CD4-positive, alpha-beta T cell (primary cell): ENCODE measurements at regions of chr17 and their contacts with region 1.

Region 1: DNA sequence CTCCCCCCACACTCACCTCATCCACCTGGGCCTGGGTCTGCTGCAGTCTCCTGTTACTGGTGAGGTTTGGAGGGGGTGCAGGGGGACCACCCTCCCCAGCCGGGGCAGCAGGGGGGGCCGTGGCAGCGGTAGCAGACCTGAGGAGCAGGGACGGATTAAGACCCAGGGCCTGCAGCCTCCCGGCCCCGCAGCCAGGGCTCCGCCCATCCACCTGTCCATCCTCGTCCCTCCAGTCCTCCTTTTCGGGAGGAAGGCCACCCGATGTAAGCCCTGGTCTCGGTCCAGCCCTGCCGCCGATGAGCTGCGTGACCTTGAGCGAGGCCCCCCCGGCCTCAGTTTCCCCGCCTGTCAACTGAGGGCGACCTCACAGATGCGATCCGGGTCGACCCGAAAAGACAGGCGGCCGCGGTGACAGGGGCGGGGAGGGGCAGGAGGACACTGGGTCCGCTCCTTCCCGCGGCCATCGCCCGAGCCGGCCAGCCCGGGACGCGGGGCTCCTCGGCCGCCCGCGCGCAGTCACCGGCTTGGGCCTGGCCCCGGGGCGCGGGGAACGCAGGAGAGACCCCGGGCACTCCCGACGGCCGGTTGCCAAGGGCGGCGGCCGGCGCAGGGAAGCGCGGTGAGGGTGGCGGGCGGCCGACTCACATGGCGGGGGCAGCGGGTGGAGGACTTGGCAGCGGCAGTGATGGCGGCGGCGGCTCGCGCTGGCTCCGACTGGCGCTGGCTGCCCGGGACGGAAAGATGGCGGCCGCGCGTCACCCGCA is at the start of gene VAMP2:
- DNase-seq: peak; percentile 71 to 95 (median 83)
- ATAC-seq: peak; percentile 47
- H3K4me3 ChIP-seq: peak within 1 kb of the TSS; percentile 86
- H3K4me3 Mint-ChIP-seq: peak within 1 kb of the TSS; percentile 95
- H3K27ac ChIP-seq: peak within 1 kb of the TSS; percentile 94 to 96
- H3K27ac Mint-ChIP-seq: no peak within 1 kb of the TSS
- H3K4me1 ChIP-seq: peaks cover 72% of the 10 kb centered on the region
- H3K4me1 Mint-ChIP-seq: peaks cover 67% of the 10 kb centered on the region
- H3K27me3 ChIP-seq: no peaks in the 10 kb centered on the region
- H3K27me3 Mint-ChIP-seq: no peaks in the 10 kb centered on the region
- CTCF ChIP-seq: no peak
- total RNA-seq, gene VAMP2: 351 to 366 TPM

Region 2: DNA sequence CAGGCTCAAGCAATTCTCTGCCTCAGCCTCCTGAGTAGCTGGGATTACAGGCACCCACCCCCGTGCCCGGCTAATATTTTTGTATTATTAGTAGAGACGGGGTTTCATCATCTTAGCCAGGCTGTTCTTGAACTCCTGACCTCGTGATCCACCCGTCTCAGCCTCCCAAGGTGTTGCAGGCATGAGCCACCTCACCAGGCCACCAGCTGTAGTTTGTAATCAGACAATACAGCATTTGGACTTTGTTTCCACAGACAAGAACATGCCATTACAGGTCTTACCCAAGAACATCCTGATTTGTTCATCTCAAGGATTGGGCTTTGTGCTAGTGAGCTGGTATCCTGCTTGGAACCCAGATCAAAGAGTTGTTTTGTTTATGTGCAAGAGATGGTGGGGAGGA is 1480.7 kb before region 1 on chr17:
- CTCF ChIA-PET with region 1: no interaction called
- POLR2A ChIA-PET with region 1: no interaction called
- intact Hi-C with region 1: no loop called
- DNase-seq: no peak
- ATAC-seq: no peak
- H3K4me3 ChIP-seq: no peak overlapping the region
- H3K4me3 Mint-ChIP-seq: no peak overlapping the region
- H3K27ac ChIP-seq: no peak overlapping the region
- H3K27ac Mint-ChIP-seq: no peak overlapping the region
- H3K4me1 ChIP-seq: peaks cover 9% of the 10 kb centered on the region
- H3K4me1 Mint-ChIP-seq: peaks cover 10% of the 10 kb centered on the region
- H3K27me3 ChIP-seq: peaks cover 10 to 36% of the 10 kb centered on the region in 2 experiments
- H3K27me3 Mint-ChIP-seq: peaks cover 52% of the 10 kb centered on the region
- CTCF ChIP-seq: no peak

Region 3: DNA sequence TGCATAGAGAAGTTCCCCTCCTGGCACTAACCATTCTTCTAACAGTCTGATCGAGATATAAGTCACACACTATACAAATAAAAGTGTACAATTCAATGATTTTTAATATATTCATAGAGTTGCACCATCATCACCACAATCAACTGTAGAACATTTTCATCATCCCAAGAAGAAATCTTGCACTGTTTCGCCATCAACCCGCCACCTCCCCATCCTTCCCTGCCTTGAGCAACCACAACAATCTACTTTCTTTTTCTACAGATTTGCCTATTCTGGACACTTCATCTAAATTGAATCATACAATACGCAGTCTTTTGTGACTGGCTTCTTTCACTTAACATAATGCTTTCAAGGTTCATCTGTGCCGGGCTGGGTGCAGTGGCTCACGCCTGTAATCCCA is 193.0 kb before region 1 on chr17:
- CTCF ChIA-PET with region 1: no interaction called
- POLR2A ChIA-PET with region 1: no interaction called
- intact Hi-C with region 1: no loop called
- DNase-seq: no peak
- ATAC-seq: no peak
- H3K4me3 ChIP-seq: no peak overlapping the region
- H3K4me3 Mint-ChIP-seq: no peak overlapping the region
- H3K27ac ChIP-seq: no peak overlapping the region
- H3K27ac Mint-ChIP-seq: no peak overlapping the region
- H3K4me1 ChIP-seq: no peaks in the 10 kb centered on the region
- H3K4me1 Mint-ChIP-seq: no peaks in the 10 kb centered on the region
- H3K27me3 ChIP-seq: peaks cover 2 to 10% of the 10 kb centered on the region in 2 experiments
- H3K27me3 Mint-ChIP-seq: peaks cover 6% of the 10 kb centered on the region
- CTCF ChIP-seq: no peak

Region 4: DNA sequence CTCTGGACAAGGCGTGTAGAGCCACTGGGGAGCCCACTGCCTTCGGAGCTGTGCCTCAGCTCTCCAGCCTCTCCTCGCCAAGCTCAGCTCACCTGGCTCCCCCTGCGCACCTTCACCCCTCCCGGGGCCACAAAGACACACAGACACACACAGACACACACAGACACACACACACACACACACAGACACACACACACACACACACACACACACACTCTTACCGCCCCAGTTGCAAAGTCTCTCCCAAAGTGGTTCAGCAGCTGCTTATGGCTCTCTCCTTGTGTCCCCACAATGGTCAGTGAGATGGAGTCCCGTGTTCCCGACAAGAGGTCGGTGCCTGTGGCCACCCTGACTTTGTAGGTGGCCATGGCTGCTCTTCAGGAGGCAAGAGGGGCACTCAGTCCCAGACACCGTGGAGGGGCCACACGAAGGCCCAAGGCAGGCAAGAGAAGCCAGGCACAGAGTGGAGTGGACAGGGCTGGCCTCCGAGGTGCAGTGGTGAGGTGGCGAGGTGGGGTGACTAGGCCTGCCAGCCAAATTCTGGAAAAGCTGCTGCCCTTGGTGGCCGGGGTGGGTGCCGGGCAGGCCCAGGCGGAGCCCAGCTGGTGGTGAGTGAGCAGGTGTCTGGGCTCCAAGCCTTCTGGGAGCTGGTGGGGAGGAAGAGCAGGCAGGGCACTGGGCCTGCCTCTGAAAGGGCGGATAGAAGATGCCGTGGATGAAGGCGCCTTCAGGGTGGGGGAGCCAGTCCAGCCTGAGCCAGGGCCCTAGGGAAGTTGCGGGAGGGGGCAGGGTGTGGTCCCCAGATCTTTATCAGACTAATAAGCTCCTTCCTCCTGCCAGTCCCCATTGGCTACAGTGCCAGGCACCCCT is 75.1 kb before region 1 on chr17 and contains the start of gene ALOX12B:
- CTCF ChIA-PET with region 1: no interaction called
- POLR2A ChIA-PET with region 1: no interaction called
- intact Hi-C with region 1: no loop called
- DNase-seq: no peak
- ATAC-seq: no peak
- H3K4me3 ChIP-seq: no peak within 1 kb of the TSS
- H3K4me3 Mint-ChIP-seq: no peak within 1 kb of the TSS
- H3K27ac ChIP-seq: no peak within 1 kb of the TSS
- H3K27ac Mint-ChIP-seq: no peak within 1 kb of the TSS
- H3K4me1 ChIP-seq: no peaks in the 10 kb centered on the region
- H3K4me1 Mint-ChIP-seq: no peaks in the 10 kb centered on the region
- H3K27me3 ChIP-seq: peaks cover 4 to 6% of the 10 kb centered on the region in 2 experiments
- H3K27me3 Mint-ChIP-seq: peaks cover 26% of the 10 kb centered on the region
- CTCF ChIP-seq: no peak
- total RNA-seq, gene ALOX12B: 0.41 TPM in 1 of 2 experiments, not detected in the other

Region 5: GRCh38 chr17:8151123-8151640 is 11.2 kb before region 1 on chr17:
- CTCF ChIA-PET with region 1: interaction called, 5 read pairs
- POLR2A ChIA-PET with region 1: interaction called, 34 read pairs
- intact Hi-C with region 1: no loop called
- DNase-seq: peak; percentile 82 to 96 (median 90)
- ATAC-seq: peak; percentile 43
- H3K4me3 ChIP-seq: peak overlapping the region; percentile 75
- H3K4me3 Mint-ChIP-seq: peak overlapping the region; percentile 95
- H3K27ac ChIP-seq: peak overlapping the region; percentile 99 to 100
- H3K27ac Mint-ChIP-seq: no peak overlapping the region
- H3K4me1 ChIP-seq: peaks cover 85% of the 10 kb centered on the region
- H3K4me1 Mint-ChIP-seq: peaks cover 51% of the 10 kb centered on the region
- H3K27me3 ChIP-seq: no peaks in the 10 kb centered on the region
- H3K27me3 Mint-ChIP-seq: peaks cover 4% of the 10 kb centered on the region
- CTCF ChIP-seq: no peak

Region 6: DNA sequence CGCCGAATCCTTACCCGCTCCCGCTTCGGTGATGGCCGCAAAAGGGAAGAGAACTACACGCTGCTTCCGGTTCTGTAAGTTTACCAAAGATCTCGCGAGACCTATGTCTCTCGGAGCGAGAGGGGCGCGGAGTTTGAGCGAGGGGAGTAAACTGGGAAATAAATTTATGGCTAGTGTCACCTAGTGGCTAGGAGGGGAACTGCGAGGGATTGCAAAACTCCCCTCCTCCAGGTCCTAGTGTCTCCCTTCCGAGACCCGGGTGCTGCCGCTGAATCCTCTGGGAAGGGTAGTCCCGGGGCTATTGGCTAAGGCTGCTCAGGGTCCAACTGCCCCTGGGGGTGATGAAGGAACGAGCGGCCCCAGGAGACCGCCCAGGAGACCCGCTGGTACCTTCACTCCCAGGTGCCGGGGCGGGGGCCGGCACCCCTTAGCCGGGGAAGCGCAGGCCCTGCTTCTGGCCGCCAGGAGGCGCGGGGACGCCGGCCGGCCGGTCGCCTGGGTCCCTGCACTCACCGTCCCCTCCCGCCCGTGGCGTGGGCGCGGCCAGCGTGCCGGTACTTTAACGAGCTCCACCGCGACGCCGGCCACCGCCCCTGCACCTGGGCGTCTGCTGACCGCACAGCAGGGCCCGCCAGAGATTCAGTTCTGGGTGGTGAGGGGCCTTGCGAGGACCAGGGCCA is 220.9 kb after region 1 on chr17 and contains the start of gene RPL26:
- CTCF ChIA-PET with region 1: no interaction called
- POLR2A ChIA-PET with region 1: no interaction called
- intact Hi-C with region 1: no loop called
- DNase-seq: peak; percentile 89 to 98 (median 93)
- ATAC-seq: peak; percentile 86
- H3K4me3 ChIP-seq: peak within 1 kb of the TSS; percentile 95
- H3K4me3 Mint-ChIP-seq: peak within 1 kb of the TSS; percentile 95
- H3K27ac ChIP-seq: peak within 1 kb of the TSS; percentile 72 to 76
- H3K27ac Mint-ChIP-seq: peak within 1 kb of the TSS; percentile 91
- H3K4me1 ChIP-seq: peaks cover 47% of the 10 kb centered on the region
- H3K4me1 Mint-ChIP-seq: peaks cover 64% of the 10 kb centered on the region
- H3K27me3 ChIP-seq: no peaks in the 10 kb centered on the region
- H3K27me3 Mint-ChIP-seq: no peaks in the 10 kb centered on the region
- CTCF ChIP-seq: peak; percentile 100
- total RNA-seq, gene RPL26: 2,959 to 3,104 TPM